ENCODE measurements at regions of chr3 and their contacts with region 1.

Region 1: DNA sequence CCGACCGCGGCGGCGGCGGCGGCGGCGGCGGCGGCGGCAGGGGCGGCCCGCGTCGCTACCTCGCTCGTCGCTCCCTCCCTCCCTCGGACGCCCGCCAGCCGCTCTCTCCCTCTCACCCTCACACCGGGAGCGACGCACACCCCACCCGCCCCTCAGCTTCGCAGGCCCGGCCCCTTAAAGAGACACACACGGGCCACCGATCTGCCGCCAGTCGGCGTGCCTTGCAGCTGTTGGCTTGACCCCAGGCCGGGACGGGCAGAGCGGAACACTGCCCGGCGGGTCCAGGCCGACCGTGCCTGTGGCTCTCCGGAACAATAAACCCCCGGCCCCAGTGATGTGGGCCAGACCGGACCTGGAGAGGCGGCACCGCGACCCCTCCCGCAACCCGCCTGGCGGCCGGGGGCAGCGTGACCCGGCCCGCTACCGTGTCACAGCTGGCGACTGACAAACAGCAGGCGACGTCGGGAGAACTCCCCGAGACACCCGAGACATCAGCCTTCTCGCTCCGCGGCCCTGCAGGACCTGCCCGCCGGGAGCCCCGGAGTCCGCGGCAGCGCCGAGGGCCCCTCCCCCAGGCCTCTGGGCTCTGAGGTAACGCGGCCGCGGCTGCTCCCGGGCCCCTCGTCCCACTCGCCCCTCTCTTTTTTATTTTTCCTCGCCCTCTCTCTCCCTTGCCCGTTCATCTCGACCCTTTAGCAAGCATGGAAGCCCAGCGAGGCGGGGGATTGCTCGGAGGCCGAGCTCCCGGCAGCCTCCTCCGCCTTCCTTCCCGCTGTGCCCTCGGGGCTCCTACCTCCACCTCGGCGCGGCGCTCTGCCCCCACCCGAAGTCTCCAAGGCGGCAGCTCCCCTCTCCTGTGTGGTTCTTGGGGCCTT is at the start of gene SETD2:
- DNase-seq: peak; percentile 94 to 96 (median 95)
- ATAC-seq: peak; percentile 95
- H3K4me3 ChIP-seq: peak within 1 kb of the TSS; percentile 67
- H3K27ac ChIP-seq: peak within 1 kb of the TSS; percentile 93
- H3K4me1 ChIP-seq: peaks cover 28 to 32% of the 10 kb centered on the region in 2 experiments; a peak in 4 of 5 replicates
- H3K27me3 ChIP-seq: no peaks in the 10 kb centered on the region
- CTCF ChIP-seq: peak; percentile 49 to 71 (median 63); a peak in 5 of 6 replicates
- EP300 ChIP-seq: peak; percentile 14; the same call in 1 of the 2 replicates
- POLR2A ChIP-seq: peak; percentile 74
- RAD21 ChIP-seq: peak; percentile 70 to 73
- polyA plus RNA-seq, gene SETD2: 8.2 to 11.0 TPM

Region 2: DNA sequence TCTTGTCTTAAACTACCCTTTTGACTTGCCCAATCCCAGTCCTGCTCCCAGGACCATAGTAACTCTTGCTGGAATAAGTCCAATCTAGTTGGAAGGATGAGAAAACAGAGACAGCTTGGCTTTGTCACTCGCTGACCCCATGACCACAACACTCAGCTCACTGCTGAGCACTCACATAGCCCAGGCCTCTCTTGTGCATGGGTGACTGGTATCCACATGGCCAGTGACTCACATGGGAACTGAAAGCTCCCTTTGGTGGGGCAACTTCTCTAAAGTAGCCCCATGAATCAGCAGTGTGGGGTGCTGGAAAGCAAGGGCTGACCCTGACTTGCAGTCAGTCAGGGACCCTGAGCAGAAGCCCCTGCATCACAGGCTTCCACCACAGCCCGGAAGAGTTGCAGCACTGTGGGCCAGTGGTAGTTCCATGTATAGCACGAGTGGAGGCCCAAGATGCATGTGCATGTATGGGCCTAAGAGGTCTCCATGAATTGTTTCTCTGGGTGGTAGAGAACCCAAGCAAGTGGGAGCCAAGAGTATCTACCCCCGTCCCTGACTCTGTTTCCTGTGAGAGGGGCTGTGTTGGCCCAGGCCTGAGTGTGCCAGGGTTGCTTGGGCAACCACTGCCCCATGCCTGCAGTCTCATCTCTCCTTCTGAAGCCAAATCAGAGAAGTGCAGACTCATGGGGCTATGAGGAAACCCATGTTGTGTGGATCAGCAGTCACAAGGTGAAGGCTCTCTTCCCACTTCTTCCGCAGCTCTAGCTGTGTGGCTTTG is 1074.8 kb before region 1 on chr3:
- CTCF ChIA-PET with region 1: no interaction called
- POLR2A ChIA-PET with region 1: no interaction called
- in situ Hi-C with region 1: no loop called
- intact Hi-C with region 1: no loop called
- DNase-seq: no peak
- ATAC-seq: no peak; the same call in 2 of the 3 replicates
- H3K4me3 ChIP-seq: no peak overlapping the region
- H3K27ac ChIP-seq: no peak overlapping the region
- H3K4me1 ChIP-seq: no peaks in the 10 kb centered on the region; a peak in 1 of 5 replicates
- H3K27me3 ChIP-seq: peaks cover 0 to 13% of the 10 kb centered on the region in 2 experiments; a peak in 3 of 5 replicates
- CTCF ChIP-seq: no peak
- EP300 ChIP-seq: no peak
- POLR2A ChIP-seq: no peak
- RAD21 ChIP-seq: no peak

Region 3: GRCh38 chr3:47079432-47079831 is 84.8 kb before region 1 on chr3:
- CTCF ChIA-PET with region 1: no interaction called
- POLR2A ChIA-PET with region 1: no interaction called
- in situ Hi-C with region 1: no loop called
- intact Hi-C with region 1: no loop called
- DNase-seq: no peak
- ATAC-seq: no peak
- H3K4me3 ChIP-seq: no peak overlapping the region
- H3K27ac ChIP-seq: no peak overlapping the region
- H3K4me1 ChIP-seq: no peaks in the 10 kb centered on the region
- H3K27me3 ChIP-seq: no peaks in the 10 kb centered on the region
- CTCF ChIP-seq: no peak
- EP300 ChIP-seq: no peak
- POLR2A ChIP-seq: no peak
- RAD21 ChIP-seq: no peak

Region 4: GRCh38 chr3:47145272-47145671 is 19.0 kb before region 1 on chr3:
- CTCF ChIA-PET with region 1: no interaction called
- POLR2A ChIA-PET with region 1: interaction called, 14 read pairs
- in situ Hi-C with region 1: no loop called
- intact Hi-C with region 1: no loop called
- DNase-seq: no peak
- ATAC-seq: no peak
- H3K4me3 ChIP-seq: no peak overlapping the region
- H3K27ac ChIP-seq: no peak overlapping the region
- H3K4me1 ChIP-seq: peaks cover 9 to 11% of the 10 kb centered on the region in 2 experiments; a peak in 3 of 5 replicates
- H3K27me3 ChIP-seq: no peaks in the 10 kb centered on the region
- CTCF ChIP-seq: no peak
- EP300 ChIP-seq: no peak
- POLR2A ChIP-seq: no peak
- RAD21 ChIP-seq: no peak

Region 5: DNA sequence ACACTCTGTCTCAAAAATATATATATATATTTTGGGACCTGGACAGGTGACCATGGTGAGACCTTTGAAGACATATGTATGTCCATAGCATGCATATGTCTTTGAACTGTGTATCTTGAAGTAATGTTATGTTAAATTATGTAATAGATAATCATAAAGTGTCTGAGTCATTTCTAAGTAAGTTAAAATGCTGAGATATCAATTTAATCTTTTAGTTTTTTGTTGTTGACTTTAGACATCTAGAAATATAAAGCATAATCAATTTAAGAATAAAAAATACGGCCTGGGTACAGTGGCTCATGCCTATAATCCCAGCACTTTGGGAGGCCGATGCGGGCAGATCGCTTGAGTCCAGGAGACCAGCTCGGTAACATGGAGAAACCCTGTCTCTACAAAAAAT is 12.3 kb after region 1 on chr3:
- CTCF ChIA-PET with region 1: no interaction called
- POLR2A ChIA-PET with region 1: interaction called, 10 read pairs
- in situ Hi-C with region 1: no loop called
- intact Hi-C with region 1: no loop called
- DNase-seq: no peak
- ATAC-seq: no peak
- H3K4me3 ChIP-seq: no peak overlapping the region
- H3K27ac ChIP-seq: no peak overlapping the region
- H3K4me1 ChIP-seq: no peaks in the 10 kb centered on the region
- H3K27me3 ChIP-seq: no peaks in the 10 kb centered on the region
- CTCF ChIP-seq: no peak
- EP300 ChIP-seq: no peak
- POLR2A ChIP-seq: no peak
- RAD21 ChIP-seq: no peak

Region 6: DNA sequence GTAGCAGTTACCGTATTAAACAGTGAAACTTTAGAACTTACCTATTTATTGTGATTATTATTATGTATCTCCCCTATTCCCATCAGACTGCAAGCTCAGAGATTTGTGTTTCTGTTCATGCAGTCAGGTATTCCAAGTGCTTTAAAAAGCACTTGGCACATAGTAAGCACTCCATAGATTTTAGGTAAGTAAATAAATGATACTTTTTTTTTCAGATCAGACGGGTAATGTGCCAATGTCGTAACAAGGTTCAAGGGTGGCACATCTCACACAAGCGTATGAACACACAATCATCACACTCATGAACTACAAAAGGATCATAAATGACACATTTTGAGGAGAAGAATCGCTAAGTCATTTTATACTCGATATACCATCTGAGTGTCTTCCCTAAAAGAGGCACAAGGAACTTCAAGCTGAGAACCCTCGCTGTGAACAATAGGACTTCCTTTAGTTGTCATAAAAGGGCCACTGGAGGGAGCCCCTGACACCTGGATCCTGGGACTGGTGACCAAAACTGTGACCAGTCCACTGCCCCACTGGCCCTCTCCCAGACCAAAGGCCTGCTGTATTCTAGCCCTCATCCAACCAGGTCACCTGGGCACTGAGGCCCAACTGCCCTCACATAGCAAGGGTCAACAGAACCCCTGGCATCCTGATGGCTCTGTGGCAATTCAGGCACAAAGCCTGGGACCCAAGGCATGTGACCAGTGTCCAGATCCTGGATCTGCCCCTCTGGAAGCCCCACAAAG is 86.2 kb after region 1 on chr3:
- CTCF ChIA-PET with region 1: no interaction called
- POLR2A ChIA-PET with region 1: interaction called, 4 read pairs
- in situ Hi-C with region 1: no loop called
- intact Hi-C with region 1: loop called (anchors 1 kb)
- DNase-seq: peak; percentile 72 to 86 (median 80)
- ATAC-seq: peak; percentile 96
- H3K4me3 ChIP-seq: no peak overlapping the region
- H3K27ac ChIP-seq: no peak overlapping the region; the same call in 2 of the 3 replicates
- H3K4me1 ChIP-seq: peaks cover 4 to 12% of the 10 kb centered on the region in 2 experiments; a peak in 3 of 5 replicates
- H3K27me3 ChIP-seq: no peaks in the 10 kb centered on the region
- CTCF ChIP-seq: peak; percentile 84 to 90 (median 87)
- EP300 ChIP-seq: no peak
- POLR2A ChIP-seq: no peak
- RAD21 ChIP-seq: peak; percentile 87 to 96

Region 7: GRCh38 chr3:47324278-47324865 is 160.1 kb after region 1 on chr3:
- CTCF ChIA-PET with region 1: interaction called, 3 read pairs
- POLR2A ChIA-PET with region 1: interaction called, 3 read pairs
- in situ Hi-C with region 1: no loop called
- intact Hi-C with region 1: loop called (anchors 1 kb)
- DNase-seq: peak; percentile 77 to 87 (median 80)
- ATAC-seq: peak; percentile 96
- H3K4me3 ChIP-seq: no peak overlapping the region
- H3K27ac ChIP-seq: no peak overlapping the region
- H3K4me1 ChIP-seq: peaks cover 6 to 14% of the 10 kb centered on the region in 2 experiments; a peak in 3 of 5 replicates
- H3K27me3 ChIP-seq: no peaks in the 10 kb centered on the region
- CTCF ChIP-seq: peak; percentile 80 to 95 (median 81)
- EP300 ChIP-seq: no peak
- POLR2A ChIP-seq: no peak
- RAD21 ChIP-seq: peak; percentile 91 to 94

Region 8: DNA sequence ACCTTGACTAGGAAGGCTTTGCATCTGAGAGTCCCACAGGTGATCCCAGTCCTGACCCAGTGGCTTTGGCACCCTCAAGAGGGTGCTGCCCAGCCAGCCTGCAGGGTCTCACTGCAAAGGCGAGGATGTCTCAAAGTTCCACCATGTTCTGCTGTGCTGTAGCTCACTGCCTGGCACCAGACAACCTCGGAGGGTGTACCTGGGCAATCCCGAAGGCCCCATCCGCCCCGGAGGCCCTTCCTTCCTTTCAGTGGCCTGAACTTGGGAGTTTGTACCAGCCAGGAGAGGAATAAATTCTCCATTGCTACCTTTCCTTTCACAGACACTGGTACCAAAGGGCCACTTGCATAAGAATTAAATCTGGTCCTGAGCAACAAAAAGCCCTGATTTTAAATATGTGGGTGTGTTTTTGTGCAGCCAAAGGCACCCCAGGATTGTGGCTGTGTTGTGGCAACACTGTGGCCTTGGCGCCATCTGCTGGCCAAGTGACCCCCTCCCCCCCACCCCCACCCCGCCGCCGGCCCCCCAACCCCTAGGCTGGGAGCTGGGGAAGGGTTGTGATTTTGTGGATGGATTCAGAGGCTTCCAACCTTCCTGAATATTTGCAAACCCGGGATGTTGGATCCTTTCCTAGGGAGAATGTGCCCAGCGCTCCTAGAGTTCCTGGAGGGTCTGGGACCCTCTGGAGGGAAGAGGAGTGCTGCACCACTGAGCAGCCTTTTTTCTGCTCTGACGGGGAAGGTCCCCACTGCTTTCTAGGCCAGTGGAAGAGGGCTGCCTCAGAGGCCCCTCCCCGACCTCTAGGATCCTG is 206.8 kb after region 1 on chr3:
- CTCF ChIA-PET with region 1: no interaction called
- POLR2A ChIA-PET with region 1: no interaction called
- in situ Hi-C with region 1: no loop called
- intact Hi-C with region 1: loop called (anchors 2 kb)
- DNase-seq: peak; percentile 59 to 85 (median 84)
- ATAC-seq: peak; percentile 84
- H3K4me3 ChIP-seq: no peak overlapping the region
- H3K27ac ChIP-seq: no peak overlapping the region
- H3K4me1 ChIP-seq: 0 out of 5 replicates have a peak, but pooled peaks cover 0 to 3% of the 10 kb centered on the region in 2 experiments
- H3K27me3 ChIP-seq: no peaks in the 10 kb centered on the region
- CTCF ChIP-seq: peak; percentile 40 to 61 (median 57); a peak in 4 of 6 replicates
- EP300 ChIP-seq: no peak
- POLR2A ChIP-seq: no peak
- RAD21 ChIP-seq: peak; percentile 42 to 63